Naive thymus-derived CD4-positive, alpha-beta T cell (primary cell): ENCODE measurements at regions of chr13 and their contacts with region 1.

Region 1: DNA sequence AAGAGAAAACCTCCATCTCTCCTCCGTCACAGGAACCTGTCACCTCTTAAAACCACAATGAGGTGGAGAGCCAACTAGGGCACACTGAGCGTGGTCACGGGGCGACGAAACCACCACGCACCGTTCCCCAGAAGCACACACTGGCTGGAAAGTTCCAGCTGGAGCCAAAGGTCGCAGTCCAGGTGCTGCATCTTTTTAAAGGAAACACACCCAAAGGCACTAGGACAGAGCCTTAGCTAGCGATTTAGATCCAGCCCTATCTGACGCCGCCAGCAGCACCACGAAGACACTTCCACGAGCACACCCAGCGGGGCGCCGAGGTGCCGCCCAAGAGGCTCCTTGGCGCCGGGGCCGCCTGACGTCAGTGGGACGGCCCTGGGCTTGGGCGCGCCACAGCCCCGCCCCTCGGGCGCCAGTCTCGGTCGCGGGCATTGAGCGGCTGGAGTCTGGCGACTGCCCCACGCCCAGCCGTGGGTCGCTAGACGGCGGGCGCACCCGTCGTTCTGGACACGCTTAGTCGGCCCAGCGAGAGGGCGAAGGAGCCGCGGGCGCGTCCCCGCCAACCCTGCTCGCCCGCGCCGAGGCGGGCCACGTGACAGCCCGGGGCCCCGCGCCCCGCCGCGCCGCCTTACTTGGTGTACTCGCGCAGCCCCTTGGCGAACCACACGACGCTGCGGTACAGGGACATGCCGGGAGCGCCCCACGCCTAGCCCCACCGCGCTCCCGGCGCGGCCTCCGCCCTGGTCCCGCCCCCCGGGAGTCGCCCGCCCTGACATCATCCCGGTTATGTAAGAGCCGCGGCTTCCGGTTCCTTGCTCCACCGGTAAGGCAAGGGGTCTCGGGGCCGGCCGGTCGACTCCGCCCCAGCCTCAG is at the start of gene DHRS12:
- DNase-seq: peak; percentile 83 to 93 (median 92)
- ATAC-seq: peak; percentile 83
- H3K4me3 ChIP-seq: peak within 1 kb of the TSS; percentile 81
- H3K4me3 Mint-ChIP-seq: peak within 1 kb of the TSS; percentile 84 to 99 (median 96)
- H3K27ac ChIP-seq: peak within 1 kb of the TSS; percentile 100
- H3K27ac Mint-ChIP-seq: peak within 1 kb of the TSS; percentile 99 to 100 (median 100)
- H3K4me1 ChIP-seq: peaks cover 29 to 32% of the 10 kb centered on the region in 2 donors
- H3K4me1 Mint-ChIP-seq: peaks cover 28 to 70% (median 52%) of the 10 kb centered on the region in 7 donors
- H3K27me3 ChIP-seq: no peaks in the 10 kb centered on the region
- H3K27me3 Mint-ChIP-seq: peaks cover 0 to 6% (median 0%) of the 10 kb centered on the region in 5 donors
- total RNA-seq, gene DHRS12: 6.7 to 25.3 (median 20.1) TPM

Region 2: DNA sequence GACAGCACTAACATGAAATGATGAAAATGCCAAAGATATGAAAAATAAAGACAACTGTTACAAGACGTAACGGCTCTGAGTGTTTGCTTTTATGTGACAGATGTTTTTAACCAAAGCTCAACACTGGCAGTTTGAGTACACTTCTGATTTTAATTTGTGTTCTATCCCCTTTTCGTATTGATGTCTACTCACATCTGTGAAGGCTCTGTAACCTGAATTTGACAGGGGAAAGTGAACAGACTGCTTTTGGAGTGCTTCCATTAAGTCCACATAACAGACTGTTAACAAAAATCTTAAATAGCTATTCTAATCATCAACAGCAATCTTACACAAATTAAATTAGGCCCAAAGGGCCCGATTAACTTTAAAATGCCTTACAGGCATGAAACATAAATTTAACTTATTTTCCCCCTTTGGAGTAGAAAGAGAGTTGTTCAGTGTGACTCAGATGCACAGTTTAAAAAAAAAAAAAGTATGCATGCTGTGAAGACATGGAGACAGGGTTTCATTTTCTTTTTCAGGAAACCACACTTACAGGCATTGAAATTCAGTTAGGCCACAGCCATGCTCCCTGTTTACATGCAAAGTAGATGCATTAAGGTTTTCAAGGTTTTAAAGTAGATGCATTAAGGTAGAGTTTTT is 910.3 kb before region 1 on chr13:
- CTCF ChIA-PET with region 1: no interaction called
- POLR2A ChIA-PET with region 1: no interaction called
- intact Hi-C with region 1: loop called in 1 of 2 experiments (anchors 10 kb)
- DNase-seq: peak in 7 of 9 donors; percentile 34 to 68 (median 55)
- ATAC-seq: peak; percentile 91
- H3K4me3 ChIP-seq: peak overlapping the region; percentile 30
- H3K4me3 Mint-ChIP-seq: peak overlapping the region; percentile 67 to 88 (median 82)
- H3K27ac ChIP-seq: peak overlapping the region; percentile 69
- H3K27ac Mint-ChIP-seq: peak overlapping the region; percentile 82 to 98 (median 95)
- H3K4me1 ChIP-seq: peaks cover 16 to 27% of the 10 kb centered on the region in 2 donors
- H3K4me1 Mint-ChIP-seq: peaks cover 26 to 50% (median 47%) of the 10 kb centered on the region in 7 donors
- H3K27me3 ChIP-seq: no peaks in the 10 kb centered on the region
- H3K27me3 Mint-ChIP-seq: no peaks in the 10 kb centered on the region

Region 3: GRCh38 chr13:51614350-51614786 is 189.3 kb before region 1 on chr13:
- CTCF ChIA-PET with region 1: interaction called, 4 read pairs
- POLR2A ChIA-PET with region 1: interaction called, 3 read pairs
- intact Hi-C with region 1: loop called in 1 of 2 experiments (anchors 10 kb)
- DNase-seq: peak in 8 of 9 donors; percentile 33 to 65 (median 58)
- ATAC-seq: peak; percentile 92
- H3K4me3 ChIP-seq: peak overlapping the region; percentile 59
- H3K4me3 Mint-ChIP-seq: peak overlapping the region; percentile 62 to 90 (median 81)
- H3K27ac ChIP-seq: peak overlapping the region; percentile 67
- H3K27ac Mint-ChIP-seq: peak overlapping the region; percentile 79 to 98 (median 93)
- H3K4me1 ChIP-seq: peaks cover 3 to 4% of the 10 kb centered on the region in 2 donors
- H3K4me1 Mint-ChIP-seq: peaks cover 11 to 26% (median 16%) of the 10 kb centered on the region in 7 donors
- H3K27me3 ChIP-seq: no peaks in the 10 kb centered on the region
- H3K27me3 Mint-ChIP-seq: peaks cover 0 to 2% (median 0%) of the 10 kb centered on the region in 5 donors

Region 4: DNA sequence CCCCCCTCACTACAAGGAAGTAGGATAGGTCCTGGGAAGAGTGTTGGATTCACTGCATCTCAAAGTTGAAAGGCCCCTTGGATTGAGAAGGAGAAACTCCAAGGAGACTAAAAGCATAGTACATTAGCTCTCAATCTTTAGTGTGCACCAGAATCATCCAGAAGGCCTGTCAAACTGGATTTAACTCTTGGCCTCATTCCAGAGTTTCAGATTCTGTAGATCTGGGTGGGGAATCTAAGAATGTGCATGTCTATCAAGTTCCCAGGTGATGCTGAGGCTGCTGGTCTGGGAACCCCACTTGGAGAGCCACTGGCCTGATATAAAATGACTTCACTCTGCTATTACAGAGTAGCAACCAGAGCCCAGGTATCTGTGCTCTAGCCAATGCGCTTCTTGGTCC is 14.4 kb before region 1 on chr13:
- CTCF ChIA-PET with region 1: no interaction called
- POLR2A ChIA-PET with region 1: no interaction called
- intact Hi-C with region 1: no loop called
- DNase-seq: no peak
- ATAC-seq: no peak
- H3K4me3 ChIP-seq: no peak overlapping the region
- H3K4me3 Mint-ChIP-seq: no peak overlapping the region
- H3K27ac ChIP-seq: no peak overlapping the region
- H3K27ac Mint-ChIP-seq: no peak overlapping the region
- H3K4me1 ChIP-seq: peaks cover 0 to 5% of the 10 kb centered on the region in 2 donors
- H3K4me1 Mint-ChIP-seq: peaks cover 4 to 28% (median 14%) of the 10 kb centered on the region in 7 donors
- H3K27me3 ChIP-seq: no peaks in the 10 kb centered on the region
- H3K27me3 Mint-ChIP-seq: no peaks in the 10 kb centered on the region

Region 5: GRCh38 chr13:51814825-51815650 is 11.4 kb after region 1 on chr13:
- CTCF ChIA-PET with region 1: interaction called, 26 read pairs
- POLR2A ChIA-PET with region 1: interaction called, 324 read pairs
- intact Hi-C with region 1: loop called (anchors 1 kb)
- DNase-seq: peak; percentile 40 to 81 (median 70)
- ATAC-seq: peak; percentile 84
- H3K4me3 ChIP-seq: peak overlapping the region; percentile 3
- H3K4me3 Mint-ChIP-seq: peak overlapping the region; percentile 44 to 100 (median 74)
- H3K27ac ChIP-seq: peak overlapping the region; percentile 85
- H3K27ac Mint-ChIP-seq: peak overlapping the region; percentile 61 to 99 (median 95)
- H3K4me1 ChIP-seq: peaks cover 21 to 75% of the 10 kb centered on the region in 2 donors
- H3K4me1 Mint-ChIP-seq: peaks cover 42 to 90% (median 86%) of the 10 kb centered on the region in 7 donors
- H3K27me3 ChIP-seq: no peaks in the 10 kb centered on the region
- H3K27me3 Mint-ChIP-seq: no peaks in the 10 kb centered on the region

Region 6: GRCh38 chr13:51942189-51942588 is 138.5 kb after region 1 on chr13:
- CTCF ChIA-PET with region 1: no interaction called
- POLR2A ChIA-PET with region 1: no interaction called
- intact Hi-C with region 1: loop called in 1 of 2 experiments (anchors 5 kb)
- DNase-seq: peak in 7 of 9 donors; percentile 34 to 63 (median 57)
- ATAC-seq: peak; percentile 83
- H3K4me3 ChIP-seq: peak overlapping the region; percentile 52
- H3K4me3 Mint-ChIP-seq: peak overlapping the region; percentile 70 to 94 (median 88)
- H3K27ac ChIP-seq: peak overlapping the region; percentile 50
- H3K27ac Mint-ChIP-seq: peak overlapping the region; percentile 58 to 95 (median 84)
- H3K4me1 ChIP-seq: peaks cover 6 to 40% of the 10 kb centered on the region in 2 donors
- H3K4me1 Mint-ChIP-seq: peaks cover 33 to 64% (median 58%) of the 10 kb centered on the region in 7 donors
- H3K27me3 ChIP-seq: no peaks in the 10 kb centered on the region
- H3K27me3 Mint-ChIP-seq: peaks cover 0 to 34% (median 0%) of the 10 kb centered on the region in 5 donors

Region 7: GRCh38 chr13:52617070-52618060 is 813.7 kb after region 1 on chr13:
- CTCF ChIA-PET with region 1: no interaction called
- POLR2A ChIA-PET with region 1: no interaction called
- intact Hi-C with region 1: loop called in 1 of 2 experiments (anchors 2 kb)
- DNase-seq: peak; percentile 61 to 85 (median 81)
- ATAC-seq: peak; percentile 97
- H3K4me3 ChIP-seq: peak overlapping the region; percentile 90
- H3K4me3 Mint-ChIP-seq: peak overlapping the region; percentile 86 to 100 (median 99)
- H3K27ac ChIP-seq: peak overlapping the region; percentile 76
- H3K27ac Mint-ChIP-seq: peak overlapping the region; percentile 95 to 97 (median 96)
- H3K4me1 ChIP-seq: peaks cover 0 to 13% of the 10 kb centered on the region in 2 donors
- H3K4me1 Mint-ChIP-seq: peaks cover 19 to 57% (median 39%) of the 10 kb centered on the region in 7 donors
- H3K27me3 ChIP-seq: no peaks in the 10 kb centered on the region
- H3K27me3 Mint-ChIP-seq: peaks cover 0 to 8% (median 0%) of the 10 kb centered on the region in 5 donors